ENCODE measurements at regions of chr16 and their contacts with region 1.

Region 1: DNA sequence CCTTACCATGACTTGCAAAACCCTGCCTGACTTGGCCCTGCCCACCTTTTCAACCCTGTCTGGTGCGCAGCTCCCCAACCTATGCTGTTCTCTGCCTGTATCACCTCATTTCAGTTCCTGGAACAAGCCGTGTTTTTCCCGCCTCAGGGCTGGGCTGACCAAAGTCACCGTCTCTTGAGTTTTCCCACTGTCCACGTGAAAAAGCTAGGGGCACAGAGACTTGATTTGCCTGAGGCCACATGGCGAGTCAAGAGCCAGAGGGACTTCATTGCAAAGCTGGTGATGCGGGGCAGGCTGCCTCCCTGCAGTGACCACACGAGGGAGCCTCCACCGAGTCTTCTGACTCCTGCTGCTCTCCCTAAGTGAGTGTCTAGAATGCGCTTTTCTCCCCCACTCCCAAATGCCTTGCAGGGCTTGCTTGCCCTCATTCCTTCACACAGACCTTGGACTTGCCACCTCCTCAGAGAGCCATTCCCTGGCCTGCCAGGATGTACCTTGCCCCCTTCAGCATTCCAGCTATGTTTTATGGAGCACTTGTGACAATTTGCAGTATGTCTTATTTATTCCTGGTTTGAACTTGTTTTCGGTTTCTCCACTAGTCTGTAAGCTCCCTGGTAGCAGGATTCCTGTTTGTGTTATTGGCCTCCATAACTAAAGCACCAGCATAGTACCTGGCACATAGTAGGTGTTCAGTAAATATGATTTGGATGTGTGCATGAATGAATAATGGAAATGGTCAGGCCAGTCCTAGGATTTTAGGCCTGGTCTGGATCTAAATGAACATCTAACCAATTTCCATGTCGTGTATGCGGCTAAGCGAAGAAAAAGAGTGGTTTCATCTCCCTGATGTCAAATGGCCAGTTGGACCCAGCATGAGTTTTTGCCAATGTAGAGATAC is 252.3 kb downstream of the SNX29 start:
- DNase-seq: peak in 1 of 2 experiments; percentile 65
- H3K4me3 ChIP-seq: no peak overlapping the region
- H3K27ac ChIP-seq: no peak overlapping the region
- H3K4me1 ChIP-seq: peaks cover 8% of the 10 kb centered on the region; the same call in 1 of the 2 replicates
- H3K27me3 ChIP-seq: no peaks in the 10 kb centered on the region
- CTCF ChIP-seq: peak; percentile 62

Region 2: DNA sequence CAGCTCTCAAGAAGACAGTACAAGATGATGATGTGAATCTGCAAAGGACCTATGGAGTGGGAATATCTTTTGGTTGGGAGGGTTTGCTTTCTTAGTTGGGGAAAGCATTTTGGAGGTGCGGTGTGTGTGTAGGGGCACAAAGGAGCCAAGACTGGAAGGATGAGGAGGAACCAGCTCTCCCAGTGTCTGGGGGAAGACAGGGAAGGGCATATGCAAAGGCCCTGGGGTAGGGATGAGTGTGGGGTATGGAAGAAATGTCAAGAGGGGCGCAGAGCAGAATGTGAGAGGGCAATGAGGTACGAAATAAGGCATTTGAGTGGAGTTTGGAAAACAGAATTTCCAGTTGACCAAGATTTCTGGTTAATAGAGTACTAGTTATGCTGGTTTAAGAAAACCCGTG is 64.9 kb before region 1 on chr16:
- CTCF ChIA-PET with region 1: interaction called, 10 read pairs
- POLR2A ChIA-PET with region 1: no interaction called
- intact Hi-C with region 1: no loop called
- DNase-seq: no peak
- H3K4me3 ChIP-seq: no peak overlapping the region
- H3K27ac ChIP-seq: no peak overlapping the region
- H3K4me1 ChIP-seq: no peaks in the 10 kb centered on the region
- H3K27me3 ChIP-seq: no peaks in the 10 kb centered on the region
- CTCF ChIP-seq: no peak

Region 3: GRCh38 chr16:12178251-12178990 is 50.4 kb before region 1 on chr16:
- CTCF ChIA-PET with region 1: interaction called, 10 read pairs
- POLR2A ChIA-PET with region 1: no interaction called
- intact Hi-C with region 1: no loop called
- DNase-seq: no peak
- H3K4me3 ChIP-seq: no peak overlapping the region
- H3K27ac ChIP-seq: no peak overlapping the region
- H3K4me1 ChIP-seq: no peaks in the 10 kb centered on the region
- H3K27me3 ChIP-seq: no peaks in the 10 kb centered on the region
- CTCF ChIP-seq: no peak

Region 4: GRCh38 chr16:12340151-12340733 is 111.4 kb after region 1 on chr16:
- CTCF ChIA-PET with region 1: interaction called, 10 read pairs
- POLR2A ChIA-PET with region 1: no interaction called
- intact Hi-C with region 1: loop called (anchors 1 kb)
- DNase-seq: peak in 1 of 2 experiments; percentile 14
- H3K4me3 ChIP-seq: no peak overlapping the region
- H3K27ac ChIP-seq: peak overlapping the region; percentile 71; the same call in 1 of the 2 replicates
- H3K4me1 ChIP-seq: peaks cover 30% of the 10 kb centered on the region
- H3K27me3 ChIP-seq: no peaks in the 10 kb centered on the region
- CTCF ChIP-seq: peak; percentile 69

Measured in PC-9 (cell line).